Activated T-helper 2 cell treated with anti-CD3 and anti-CD28 coated beads, Interferon-gamma antibody, Interleukin-2, Interleukin-4, amounts not matched to agents 10 μg/mL and 5 μg/mL and 100 μg/mL, durations not matched to agents 14 hours and 24 hours and 36 hours (primary cell): ENCODE measurements at regions of chr11 and their contacts with region 1.

Region 1: GRCh38 chr11:118046051-118046963 is 30.6 kb upstream of the TMPRSS4 start:
- DNase-seq: peak; percentile 25
- H3K4me3 Mint-ChIP-seq: peak overlapping the region; percentile 17
- H3K27ac Mint-ChIP-seq: peak overlapping the region; percentile 97
- H3K4me1 Mint-ChIP-seq: peaks cover 83% of the 10 kb centered on the region
- H3K27me3 Mint-ChIP-seq: no peaks in the 10 kb centered on the region

Region 2: DNA sequence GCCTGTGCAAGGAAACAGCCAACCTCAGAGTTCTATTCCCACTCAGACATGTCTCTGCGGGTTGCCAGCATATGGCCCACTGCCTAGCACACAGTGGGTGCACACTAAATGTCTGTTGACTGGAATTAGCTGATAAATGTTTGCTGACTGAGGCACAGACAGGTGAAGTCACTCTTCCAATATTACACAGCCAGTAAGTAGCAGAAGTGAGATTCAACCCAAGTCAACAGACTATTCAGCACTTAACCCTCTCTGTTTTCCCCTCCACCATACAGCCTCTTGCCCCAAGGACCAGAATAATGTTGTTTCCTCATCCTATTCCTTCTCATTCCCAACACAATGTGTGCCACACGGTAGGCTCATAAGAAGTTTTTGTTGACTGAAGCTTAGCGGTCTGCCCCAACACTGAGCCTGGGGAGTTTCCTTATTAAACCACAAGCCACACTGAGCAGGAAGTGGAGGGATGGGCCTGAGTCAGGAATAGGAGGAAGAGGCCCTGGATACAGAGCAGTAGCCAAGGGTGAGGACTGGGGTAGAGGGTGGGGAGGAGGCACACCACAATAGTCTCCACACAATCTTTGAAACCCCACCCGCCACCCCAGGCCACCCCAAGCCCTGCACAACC is 75.8 kb before region 1 on chr11:
- intact Hi-C with region 1: no loop called
- DNase-seq: no peak
- H3K4me3 Mint-ChIP-seq: peak overlapping the region; percentile 34
- H3K27ac Mint-ChIP-seq: peak overlapping the region; percentile 54
- H3K4me1 Mint-ChIP-seq: peaks cover 63% of the 10 kb centered on the region
- H3K27me3 Mint-ChIP-seq: no peaks in the 10 kb centered on the region

Region 3: DNA sequence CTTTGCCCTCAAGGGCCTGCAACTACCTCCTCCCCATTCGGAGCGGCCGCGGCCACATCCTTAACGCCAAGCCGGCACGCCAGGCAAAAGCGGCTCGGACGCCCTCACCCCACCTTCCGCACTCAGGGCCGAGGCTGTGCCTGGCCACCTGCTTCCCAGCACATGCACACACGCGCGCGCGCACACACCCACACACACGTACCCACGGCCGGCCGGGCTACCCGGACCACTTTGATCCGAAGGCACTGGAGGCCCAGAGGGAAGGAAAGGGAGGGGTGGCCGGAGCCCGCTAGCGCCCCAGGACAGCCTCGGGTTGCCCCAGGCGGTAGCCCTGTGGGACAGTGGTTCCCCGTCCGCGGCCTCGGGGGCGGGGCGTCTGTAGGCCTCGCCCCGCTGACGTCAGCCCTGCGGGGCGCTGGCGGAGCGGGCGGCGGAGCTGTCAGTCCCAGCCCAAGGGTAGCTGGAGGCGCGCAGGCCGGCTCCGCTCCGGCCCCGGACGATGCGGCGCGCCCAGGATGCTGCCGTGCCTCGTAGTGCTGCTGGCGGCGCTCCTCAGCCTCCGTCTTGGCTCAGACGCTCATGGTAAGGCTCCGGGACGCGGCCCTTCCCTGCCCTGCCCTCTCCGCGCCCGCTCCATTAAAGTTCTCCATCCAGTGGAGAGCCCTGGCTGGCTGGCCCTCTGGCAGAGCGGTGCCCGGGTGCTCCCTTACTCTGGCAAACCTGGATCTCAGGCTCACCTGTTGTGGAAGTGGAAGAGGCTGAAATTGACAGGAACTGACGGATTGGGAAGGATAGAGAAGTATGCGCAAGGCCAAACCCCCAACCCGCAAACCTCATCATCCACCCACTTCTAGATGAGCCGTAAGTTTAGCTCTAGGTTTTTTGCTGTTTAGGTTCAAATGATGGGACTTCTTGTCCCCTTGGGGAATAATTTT is 60.1 kb before region 1 on chr11 and contains the start of gene IL10RA:
- intact Hi-C with region 1: loop called (anchors 1 kb)
- DNase-seq: peak; percentile 85
- H3K4me3 Mint-ChIP-seq: peak within 1 kb of the TSS; percentile 87
- H3K27ac Mint-ChIP-seq: peak within 1 kb of the TSS; percentile 90
- H3K4me1 Mint-ChIP-seq: peaks cover 58% of the 10 kb centered on the region
- H3K27me3 Mint-ChIP-seq: no peaks in the 10 kb centered on the region
- total RNA-seq, gene IL10RA: 144 and 147 TPM in 2 replicates

Region 4: DNA sequence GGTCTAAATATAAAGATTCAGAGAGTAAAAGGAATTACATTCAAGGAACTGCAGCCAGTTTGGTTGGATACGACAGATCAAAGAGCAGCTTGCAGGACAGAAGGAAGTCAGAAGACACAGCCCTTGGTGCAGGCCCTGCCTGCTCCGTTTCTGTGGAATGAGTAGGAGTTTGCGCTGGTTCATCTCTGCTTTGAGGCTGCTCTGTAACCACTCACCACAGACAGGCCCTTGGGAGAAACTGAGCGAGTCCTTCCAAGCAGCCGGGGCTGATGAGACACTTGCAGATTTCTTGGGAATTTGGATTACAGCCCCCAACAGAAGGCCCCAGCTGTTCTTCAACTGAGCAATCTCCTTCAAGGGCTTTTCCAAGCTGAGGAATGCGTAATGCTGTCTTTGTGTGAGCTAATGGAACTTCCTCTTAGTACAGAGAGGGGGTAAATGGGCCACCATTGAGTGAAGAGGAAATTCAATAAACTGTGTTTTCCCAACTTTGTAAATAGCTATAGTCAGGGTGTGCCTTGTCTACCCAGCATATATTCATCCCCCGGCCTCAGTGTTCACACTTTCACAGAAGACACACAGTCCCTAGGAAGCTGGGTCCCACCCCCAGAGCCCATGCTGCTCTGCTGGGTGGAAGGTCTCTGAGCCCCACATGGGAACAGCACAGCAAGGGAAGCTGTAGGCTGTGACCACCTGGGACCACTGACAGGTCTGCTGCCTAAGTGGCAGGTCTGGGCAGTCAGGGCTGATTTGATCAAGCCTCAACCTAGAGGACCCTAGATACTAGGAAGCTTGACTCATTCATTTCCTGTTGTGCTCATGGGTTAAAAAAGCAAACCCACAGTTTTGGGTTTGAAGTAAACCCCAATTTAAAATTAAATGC is 43.5 kb before region 1 on chr11:
- intact Hi-C with region 1: loop called (anchors 1 kb)
- DNase-seq: peak; percentile 61
- H3K4me3 Mint-ChIP-seq: peak overlapping the region; percentile 54
- H3K27ac Mint-ChIP-seq: peak overlapping the region; percentile 99
- H3K4me1 Mint-ChIP-seq: peaks cover 85% of the 10 kb centered on the region
- H3K27me3 Mint-ChIP-seq: no peaks in the 10 kb centered on the region

Region 5: GRCh38 chr11:118012083-118012669 is 34.1 kb before region 1 on chr11:
- intact Hi-C with region 1: loop called (anchors 1 kb)
- DNase-seq: no peak
- H3K4me3 Mint-ChIP-seq: no peak overlapping the region
- H3K27ac Mint-ChIP-seq: peak overlapping the region; percentile 63
- H3K4me1 Mint-ChIP-seq: peaks cover 80% of the 10 kb centered on the region
- H3K27me3 Mint-ChIP-seq: no peaks in the 10 kb centered on the region

Region 6: DNA sequence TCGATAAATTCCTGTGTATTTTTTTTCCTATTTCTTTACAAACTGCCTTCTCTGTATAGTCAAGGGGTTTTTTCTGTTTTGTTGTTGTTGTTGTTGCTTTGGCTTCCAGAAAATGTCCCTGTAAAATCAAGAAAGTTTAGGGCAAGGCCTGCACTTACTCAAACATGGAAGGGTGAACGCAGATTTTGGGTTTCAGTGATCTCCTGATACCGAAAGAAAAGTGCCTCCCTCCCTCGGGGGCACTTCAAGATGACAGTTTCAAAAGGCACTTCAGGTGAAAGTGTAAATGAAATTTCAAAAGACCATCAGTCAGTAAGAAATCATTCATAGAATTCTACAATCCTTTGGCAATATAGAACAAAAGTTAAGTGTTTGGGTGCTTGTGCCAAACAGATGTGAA is 12.9 kb before region 1 on chr11:
- intact Hi-C with region 1: loop called (anchors 1 kb)
- DNase-seq: no peak
- H3K4me3 Mint-ChIP-seq: peak overlapping the region; percentile 7
- H3K27ac Mint-ChIP-seq: peak overlapping the region; percentile 85
- H3K4me1 Mint-ChIP-seq: peaks cover 56% of the 10 kb centered on the region
- H3K27me3 Mint-ChIP-seq: no peaks in the 10 kb centered on the region

Region 7: DNA sequence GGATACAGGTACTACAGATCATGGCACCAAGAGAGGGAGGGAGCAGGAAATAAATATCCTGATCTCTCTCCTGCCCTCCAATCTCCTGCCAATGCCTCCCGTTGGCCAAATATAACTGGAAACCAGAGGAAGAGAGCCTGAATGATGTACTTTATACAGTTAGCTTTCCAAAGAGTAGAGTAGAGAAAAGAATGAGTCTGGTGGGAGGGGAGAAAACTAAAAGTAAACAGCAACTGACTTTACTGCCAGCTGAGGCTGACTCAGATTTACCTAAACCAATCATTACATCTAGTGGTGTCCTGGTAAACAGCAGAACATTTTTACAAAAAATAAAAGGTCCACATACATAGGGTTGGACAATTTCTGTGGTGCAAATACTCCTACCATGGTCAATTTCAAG is 200.7 kb after region 1 on chr11:
- intact Hi-C with region 1: loop called (anchors 5 kb)
- DNase-seq: no peak
- H3K4me3 Mint-ChIP-seq: peak overlapping the region; percentile 56
- H3K27ac Mint-ChIP-seq: peak overlapping the region; percentile 95
- H3K4me1 Mint-ChIP-seq: peaks cover 66% of the 10 kb centered on the region
- H3K27me3 Mint-ChIP-seq: no peaks in the 10 kb centered on the region